ENCODE measurements at regions of chr1 and their contacts with region 1.

Region 1: GRCh38 chr1:59560807-59561450 is 253.8 kb upstream of the HOOK1 start:
- DNase-seq: no peak
- H3K4me3 ChIP-seq: no peak overlapping the region
- H3K27ac ChIP-seq: no peak overlapping the region
- H3K4me1 ChIP-seq: no peaks in the 10 kb centered on the region
- H3K27me3 ChIP-seq: no peaks in the 10 kb centered on the region
- CTCF ChIP-seq: no peak

Region 2: GRCh38 chr1:59076612-59077011 is 484.3 kb before region 1 on chr1:
- CTCF ChIA-PET with region 1: no interaction called
- dilution Hi-C with region 1: no loop called
- in situ Hi-C with region 1: no loop called
- intact Hi-C with region 1: loop called (anchors 10 kb)
- DNase-seq: no peak
- H3K4me3 ChIP-seq: no peak overlapping the region
- H3K27ac ChIP-seq: no peak overlapping the region
- H3K4me1 ChIP-seq: peaks cover 11% of the 10 kb centered on the region
- H3K27me3 ChIP-seq: no peaks in the 10 kb centered on the region
- CTCF ChIP-seq: peak; percentile 13 to 33

Region 3: GRCh38 chr1:60575326-60575977 is 1014.5 kb after region 1 on chr1:
- CTCF ChIA-PET with region 1: no interaction called
- dilution Hi-C with region 1: no loop called
- in situ Hi-C with region 1: no loop called
- intact Hi-C with region 1: no loop called
- DNase-seq: no peak
- H3K4me3 ChIP-seq: no peak overlapping the region
- H3K27ac ChIP-seq: no peak overlapping the region
- H3K4me1 ChIP-seq: peaks cover 28% of the 10 kb centered on the region
- H3K27me3 ChIP-seq: no peaks in the 10 kb centered on the region
- CTCF ChIP-seq: no peak

Measured in mammary epithelial cell (primary cell).